SK-N-SH (cell line): ENCODE measurements at regions of chrX and their contacts with region 1.

Region 1: GRCh38 chrX:54044126-54044876 is at the start of gene PHF8:
- DNase-seq: peak; percentile 84
- H3K4me3 ChIP-seq: peak within 1 kb of the TSS; percentile 66 to 73
- H3K27ac ChIP-seq: peak within 1 kb of the TSS; percentile 91
- H3K4me1 ChIP-seq: peaks cover 0 to 8% of the 10 kb centered on the region in 2 experiments; a peak in 1 of 4 replicates
- H3K27me3 ChIP-seq: peaks cover 6% of the 10 kb centered on the region; the same call in 1 of the 2 replicates
- CTCF ChIP-seq: no peak
- EP300 ChIP-seq: no peak
- RAD21 ChIP-seq: no peak
- polyA plus RNA-seq, gene PHF8: 7.8 and 11.4 TPM in 2 replicates

Region 2: DNA sequence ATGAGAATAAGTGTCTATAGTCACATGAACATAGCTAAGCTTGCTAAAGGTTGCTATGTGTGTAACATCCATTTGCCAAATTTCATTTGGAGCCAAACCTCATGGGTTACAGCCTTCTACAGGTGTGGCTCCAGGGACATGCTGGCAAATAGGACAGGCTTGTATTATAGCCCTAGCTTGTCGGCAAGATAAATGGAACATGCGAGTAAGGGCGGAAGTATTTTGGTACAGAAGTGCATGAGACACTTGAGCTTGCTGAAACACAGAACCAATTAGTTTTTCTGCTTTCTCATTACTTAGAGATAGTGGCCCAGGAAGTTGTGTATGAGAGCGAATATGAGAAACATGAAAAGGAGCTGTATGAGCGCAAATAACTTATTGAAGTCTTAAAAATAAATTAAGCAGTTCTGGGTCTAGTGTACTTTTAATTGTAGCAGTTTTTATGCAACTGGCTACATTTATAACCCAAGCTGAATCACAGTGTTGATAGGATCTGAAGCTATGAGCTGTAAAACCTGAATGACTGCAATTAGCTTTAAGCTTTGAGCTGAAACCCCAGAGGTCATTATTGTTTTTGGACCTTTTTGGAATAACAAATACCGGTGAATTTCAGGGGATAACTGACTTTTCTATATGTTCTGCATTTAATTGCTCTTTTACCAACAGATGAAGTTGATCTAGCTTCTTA is 883.9 kb before region 1 on chrX:
- CTCF ChIA-PET with region 1: no interaction called
- POLR2A ChIA-PET with region 1: no interaction called
- DNase-seq: no peak
- H3K4me3 ChIP-seq: no peak overlapping the region
- H3K27ac ChIP-seq: no peak overlapping the region
- H3K4me1 ChIP-seq: no peaks in the 10 kb centered on the region
- H3K27me3 ChIP-seq: peaks cover 21% of the 10 kb centered on the region; the same call in 1 of the 2 replicates
- CTCF ChIP-seq: no peak
- EP300 ChIP-seq: no peak
- RAD21 ChIP-seq: no peak

Region 3: DNA sequence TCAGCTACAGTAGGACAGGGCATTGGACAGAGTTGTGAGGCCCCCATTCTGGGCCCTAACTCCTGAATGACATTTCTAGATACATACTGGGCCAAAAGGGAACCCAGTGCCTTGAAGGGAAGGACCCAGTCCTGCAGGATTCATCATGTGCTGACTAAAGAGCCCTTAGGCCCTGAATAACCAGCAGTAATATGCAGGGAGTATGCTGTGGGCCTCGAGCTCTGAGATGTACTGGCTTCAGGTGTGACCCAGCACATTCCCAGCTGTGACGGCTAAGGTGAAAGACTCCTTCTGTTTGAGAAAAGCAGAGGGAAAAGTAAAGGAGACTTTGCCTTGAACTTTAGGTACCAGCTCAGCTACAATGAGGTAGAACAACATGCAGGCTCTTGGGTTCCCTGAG is 219.6 kb before region 1 on chrX:
- CTCF ChIA-PET with region 1: no interaction called
- POLR2A ChIA-PET with region 1: no interaction called
- DNase-seq: no peak
- H3K4me3 ChIP-seq: no peak overlapping the region
- H3K27ac ChIP-seq: no peak overlapping the region
- H3K4me1 ChIP-seq: no peaks in the 10 kb centered on the region
- H3K27me3 ChIP-seq: no peaks in the 10 kb centered on the region; the same call in 1 of the 2 replicates
- CTCF ChIP-seq: no peak
- EP300 ChIP-seq: no peak
- RAD21 ChIP-seq: no peak

Region 4: DNA sequence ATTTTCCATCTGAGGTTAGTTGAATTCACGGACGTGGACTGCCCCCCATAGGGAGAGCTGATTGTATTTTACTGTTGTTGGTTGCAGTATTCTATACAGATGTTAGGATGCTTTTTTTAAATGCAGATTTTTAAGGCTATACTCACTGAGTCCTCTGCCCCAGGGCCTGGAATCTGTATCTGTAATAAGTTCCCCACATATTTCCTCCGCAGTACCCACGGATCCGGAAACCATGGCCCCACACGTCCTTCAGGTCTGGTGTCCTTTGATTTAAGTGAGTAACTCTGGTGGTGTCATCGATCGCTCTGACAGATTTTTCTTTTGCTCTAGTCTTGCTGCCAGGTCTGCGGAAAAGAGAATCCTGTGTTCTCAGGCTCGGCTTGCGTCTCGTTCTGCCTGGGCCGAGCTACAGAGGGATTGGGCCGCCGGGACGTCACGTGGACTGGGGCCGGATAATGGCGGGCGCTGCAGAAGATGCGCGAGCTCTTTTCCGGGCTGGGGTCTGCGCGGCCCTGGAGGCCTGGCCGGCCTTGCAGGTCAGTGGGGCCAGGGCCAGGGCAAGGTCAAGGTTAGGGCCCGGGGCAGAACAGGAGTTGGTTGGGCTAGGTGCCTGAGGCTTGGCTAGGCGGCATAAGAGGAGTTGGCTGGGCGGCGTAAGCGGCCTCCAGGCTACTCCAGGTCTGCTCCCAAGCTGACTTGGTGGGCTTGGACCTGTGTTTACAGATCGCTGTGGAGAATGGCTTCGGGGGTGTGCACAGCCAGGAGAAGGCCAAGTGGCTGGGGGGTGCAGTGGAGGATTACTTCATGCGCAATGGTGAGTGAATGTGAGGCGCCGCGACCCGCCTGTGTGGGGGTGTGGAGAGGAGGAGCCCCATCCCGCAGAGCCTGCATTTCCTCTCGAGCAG is 395.9 kb after region 1 on chrX and contains the start of gene TSR2:
- CTCF ChIA-PET with region 1: interaction called, 7 read pairs
- POLR2A ChIA-PET with region 1: interaction called, 10 read pairs
- DNase-seq: peak; percentile 82
- H3K4me3 ChIP-seq: peak within 1 kb of the TSS; percentile 78 to 97
- H3K27ac ChIP-seq: peak within 1 kb of the TSS in 1 of 2 experiments; percentile 29; a peak in 2 of 4 replicates
- H3K4me1 ChIP-seq: peaks cover 0 to 7% of the 10 kb centered on the region in 2 experiments; a peak in 2 of 4 replicates
- H3K27me3 ChIP-seq: no peaks in the 10 kb centered on the region; the same call in 1 of the 2 replicates
- CTCF ChIP-seq: peak; percentile 47
- EP300 ChIP-seq: no peak; a peak in 1 of 4 replicates
- RAD21 ChIP-seq: peak; percentile 70
- polyA plus RNA-seq, gene TSR2: 23.7 and 32.8 TPM in 2 replicates